Sigmoid colon (tissue), 7 donors: ENCODE measurements at regions of chr3 and their contacts with region 1.

Region 1: GRCh38 chr3:49839193-49839809 is 17.1 kb downstream of the TRAIP start:
- DNase-seq: peak; percentile 87
- H3K4me3 ChIP-seq: no peak overlapping the region
- H3K27ac ChIP-seq: peak overlapping the region in 2 of 4 donors; percentile 9 to 25
- H3K4me1 ChIP-seq: peaks cover 0 to 15% (median 4%) of the 10 kb centered on the region in 4 donors
- H3K27me3 ChIP-seq: no peaks in the 10 kb centered on the region
- CTCF ChIP-seq: peak; percentile 77 to 89 (median 84)
- EP300 ChIP-seq: no peak
- POLR2A ChIP-seq: no peak

Region 2: GRCh38 chr3:49539659-49540560 is 299.4 kb before region 1 on chr3:
- intact Hi-C with region 1: loop called (anchors 5 kb)
- DNase-seq: peak; percentile 97
- H3K4me3 ChIP-seq: peak overlapping the region; percentile 25 to 55 (median 53)
- H3K27ac ChIP-seq: peak overlapping the region; percentile 85 to 88 (median 86)
- H3K4me1 ChIP-seq: peaks cover 0 to 20% (median 16%) of the 10 kb centered on the region in 4 donors
- H3K27me3 ChIP-seq: no peaks in the 10 kb centered on the region
- CTCF ChIP-seq: peak; percentile 88 to 93 (median 92)
- EP300 ChIP-seq: no peak
- POLR2A ChIP-seq: peak in 1 of 2 donors; percentile 10

Region 3: GRCh38 chr3:49703443-49703927 is 135.8 kb before region 1 on chr3:
- intact Hi-C with region 1: loop called (anchors 2 kb)
- DNase-seq: peak; percentile 80
- H3K4me3 ChIP-seq: no peak overlapping the region
- H3K27ac ChIP-seq: no peak overlapping the region
- H3K4me1 ChIP-seq: peaks cover 0 to 2% (median 0%) of the 10 kb centered on the region in 4 donors
- H3K27me3 ChIP-seq: no peaks in the 10 kb centered on the region
- CTCF ChIP-seq: peak; percentile 30 to 76 (median 72)
- EP300 ChIP-seq: no peak
- POLR2A ChIP-seq: no peak

Region 4: DNA sequence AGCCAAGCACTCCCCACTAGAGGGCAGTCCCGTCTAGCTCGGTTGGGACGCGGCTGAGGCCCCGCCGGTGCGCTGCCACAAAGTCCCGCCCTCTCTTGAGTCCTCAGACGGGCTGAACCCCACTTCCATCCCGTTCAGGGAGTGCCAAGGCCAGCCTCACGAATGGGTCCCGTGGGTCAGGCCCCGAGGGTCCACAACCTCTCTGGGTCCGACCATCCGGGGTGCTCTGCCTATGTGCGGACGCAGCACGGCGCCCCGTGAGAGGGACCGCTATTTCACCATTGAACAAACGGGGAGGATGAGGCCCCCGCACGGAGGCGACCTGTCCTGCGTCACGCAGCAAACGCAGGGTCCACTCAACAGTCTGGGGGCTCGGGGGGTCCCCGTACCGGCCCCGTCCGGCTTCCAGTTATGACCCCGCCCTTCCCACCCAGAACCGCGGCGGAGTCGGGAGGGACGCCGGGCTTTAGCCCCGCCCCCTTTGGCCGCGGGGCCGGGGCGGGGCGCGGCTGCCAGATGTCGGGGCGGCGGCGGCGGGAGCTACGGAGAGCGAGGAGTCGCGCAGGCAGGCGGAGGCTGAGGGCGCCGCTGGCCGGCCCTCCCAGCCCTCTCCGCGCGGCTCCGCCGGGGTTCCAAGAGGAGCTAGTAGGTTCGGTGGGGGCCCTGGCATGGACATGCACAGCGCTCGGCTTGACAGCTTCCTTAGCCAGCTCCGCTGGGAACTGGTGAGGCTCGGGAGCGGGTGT is 36.4 kb before region 1 on chr3 and contains the start of gene INKA1:
- intact Hi-C with region 1: loop called (anchors 1 kb)
- DNase-seq: peak; percentile 95
- H3K4me3 ChIP-seq: peak within 1 kb of the TSS; percentile 57 to 86 (median 70)
- H3K27ac ChIP-seq: peak within 1 kb of the TSS; percentile 88 to 95 (median 92)
- H3K4me1 ChIP-seq: peaks cover 0 to 50% (median 38%) of the 10 kb centered on the region in 4 donors
- H3K27me3 ChIP-seq: no peaks in the 10 kb centered on the region
- CTCF ChIP-seq: peak in 3 of 4 experiments; percentile 87 to 91 (median 88)
- EP300 ChIP-seq: no peak
- POLR2A ChIP-seq: no peak
- total RNA-seq, gene INKA1: 0.95 to 5.0 (median 4.1) TPM

Region 5: GRCh38 chr3:49882166-49882565 is 42.9 kb after region 1 on chr3:
- intact Hi-C with region 1: no loop called
- DNase-seq: no peak
- H3K4me3 ChIP-seq: no peak overlapping the region
- H3K27ac ChIP-seq: no peak overlapping the region
- H3K4me1 ChIP-seq: no peaks in the 10 kb centered on the region
- H3K27me3 ChIP-seq: peaks cover 0 to 5% (median 0%) of the 10 kb centered on the region in 3 donors
- CTCF ChIP-seq: no peak
- EP300 ChIP-seq: no peak
- POLR2A ChIP-seq: no peak